Activated CD4-positive, alpha-beta T cell treated with anti-CD3 and anti-CD28 coated beads for 36 hours (primary cell): ENCODE measurements at regions of chr10 and their contacts with region 1.

Region 1: DNA sequence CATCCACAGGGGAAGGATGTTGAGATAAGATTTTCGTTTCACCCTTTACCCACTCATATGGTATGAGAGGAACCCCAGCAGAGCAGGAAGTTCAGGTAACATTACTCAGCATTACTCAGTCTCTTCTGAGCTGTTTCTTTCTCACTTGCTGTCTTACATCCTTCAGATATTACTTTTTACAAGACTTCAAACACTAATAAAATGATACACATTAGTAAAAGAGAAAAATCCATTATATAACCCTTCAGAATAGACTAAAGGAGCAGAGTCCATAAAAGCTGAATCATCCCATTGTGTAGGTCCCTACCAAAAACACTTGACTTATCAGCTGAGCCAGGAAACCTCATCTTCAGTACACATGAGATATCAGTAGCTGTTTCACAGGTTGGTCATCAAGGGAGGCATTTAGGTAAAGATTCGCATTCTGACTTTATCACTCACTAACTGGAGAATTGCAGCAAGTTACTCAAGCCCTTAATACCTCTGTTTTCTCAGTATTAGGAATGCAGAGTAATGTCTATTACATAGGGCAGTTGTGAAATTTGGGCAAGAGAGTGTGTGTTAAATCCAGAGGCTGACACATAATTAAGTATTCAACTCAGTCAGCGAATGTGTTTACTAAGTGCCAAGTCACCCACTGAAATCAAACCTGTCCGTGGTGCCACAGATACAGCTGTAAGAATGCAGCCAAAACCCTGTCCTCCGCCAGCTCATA is 44.7 kb downstream of the KLF6 start:
- DNase-seq: peak; percentile 38
- ATAC-seq: peak; percentile 85
- H3K4me3 Mint-ChIP-seq: no peak overlapping the region
- H3K27ac Mint-ChIP-seq: peak overlapping the region; percentile 60
- H3K4me1 Mint-ChIP-seq: peaks cover 33% of the 10 kb centered on the region
- H3K27me3 Mint-ChIP-seq: no peaks in the 10 kb centered on the region

Region 2: DNA sequence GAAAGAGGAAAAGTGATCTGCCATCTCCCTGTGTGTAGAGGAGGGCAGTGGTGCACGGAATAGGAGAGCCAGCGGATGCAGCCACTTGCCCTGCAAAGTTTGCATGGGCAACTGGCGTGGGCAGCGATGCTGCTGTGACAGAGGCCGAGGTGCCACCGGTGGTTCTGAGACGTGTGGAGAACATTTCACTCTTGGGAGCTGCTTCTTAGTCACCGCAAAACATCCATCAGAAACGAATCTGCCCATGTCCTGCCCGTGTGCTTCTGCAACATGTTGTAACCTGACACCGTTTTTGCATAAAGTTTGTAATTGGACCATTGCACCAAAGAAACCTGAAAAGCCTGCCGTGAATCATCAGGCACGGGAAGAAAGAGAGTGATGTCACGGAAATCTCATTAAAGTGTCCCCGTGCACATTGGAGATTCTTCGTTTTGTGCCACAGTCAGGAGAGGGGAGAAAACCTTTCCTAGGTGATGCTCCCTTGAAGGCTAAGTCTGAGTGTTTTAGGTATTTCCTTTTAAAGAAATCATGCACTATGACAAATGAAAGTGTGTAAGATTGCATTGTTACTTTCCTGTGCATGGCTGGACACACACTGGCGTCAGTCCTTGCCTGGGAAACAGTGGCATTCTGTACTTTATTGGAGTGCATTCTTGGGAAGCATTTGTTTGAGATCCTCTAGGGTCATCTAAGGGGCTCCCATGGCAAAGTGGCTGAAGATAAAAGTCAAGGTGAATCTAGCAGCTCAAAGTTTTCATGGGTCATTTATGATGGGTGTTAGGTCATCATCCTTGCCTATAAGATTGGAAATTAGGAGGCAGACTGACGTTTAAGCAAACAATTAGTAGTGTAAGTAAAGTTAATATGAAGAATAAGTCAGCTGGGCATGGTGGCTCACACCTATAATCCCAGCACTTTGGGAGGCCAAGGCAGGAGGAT is 257.8 kb before region 1 on chr10:
- CTCF ChIA-PET with region 1: no interaction called
- POLR2A ChIA-PET with region 1: no interaction called
- intact Hi-C with region 1: no loop called
- DNase-seq: peak; percentile 18
- ATAC-seq: peak; percentile 28
- H3K4me3 Mint-ChIP-seq: no peak overlapping the region
- H3K27ac Mint-ChIP-seq: no peak overlapping the region
- H3K4me1 Mint-ChIP-seq: peaks cover 42% of the 10 kb centered on the region
- H3K27me3 Mint-ChIP-seq: no peaks in the 10 kb centered on the region

Region 3: GRCh38 chr10:3623746-3624145 is 116.6 kb before region 1 on chr10:
- CTCF ChIA-PET with region 1: interaction called, 3 read pairs
- POLR2A ChIA-PET with region 1: interaction called, 3 read pairs
- intact Hi-C with region 1: loop called (anchors 1 to 2 kb)
- DNase-seq: no peak
- ATAC-seq: no peak
- H3K4me3 Mint-ChIP-seq: no peak overlapping the region
- H3K27ac Mint-ChIP-seq: peak overlapping the region; percentile 14
- H3K4me1 Mint-ChIP-seq: peaks cover 30% of the 10 kb centered on the region
- H3K27me3 Mint-ChIP-seq: no peaks in the 10 kb centered on the region

Region 4: DNA sequence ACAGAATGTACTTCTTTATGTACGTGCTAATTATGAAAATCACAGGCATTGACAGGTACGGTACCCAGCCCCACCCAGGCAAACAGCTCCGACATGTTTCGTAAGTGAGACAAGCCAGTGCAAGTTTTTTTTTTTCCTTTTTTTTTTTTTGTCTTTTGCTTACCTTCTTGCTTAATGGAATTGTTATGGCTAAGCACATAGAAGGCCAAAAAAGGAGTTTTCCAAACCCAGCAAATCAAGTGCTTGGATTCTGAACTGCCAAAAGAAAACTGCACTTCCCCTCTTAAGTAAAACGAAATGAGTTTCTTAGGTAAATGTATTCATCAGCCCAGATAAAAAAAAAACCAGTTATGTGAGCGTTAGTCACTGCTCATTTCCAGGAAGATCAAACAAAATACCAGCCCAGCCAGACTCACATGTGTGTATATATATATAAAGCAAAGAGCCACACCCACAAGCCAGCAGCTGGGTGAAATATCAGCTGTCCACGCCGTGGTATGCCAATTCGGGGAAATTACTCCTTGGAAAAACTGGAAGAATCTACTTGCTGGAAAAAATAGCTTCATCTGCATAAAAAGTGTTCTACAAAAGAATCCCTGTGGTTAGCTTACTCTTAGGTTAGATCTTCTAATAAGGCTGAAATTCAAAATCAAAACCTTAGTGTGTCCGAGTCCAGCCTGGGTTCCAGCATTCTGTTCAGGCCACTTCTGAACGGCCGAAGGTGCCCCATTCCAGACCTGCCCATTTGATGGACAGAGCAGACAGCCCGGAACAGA is 36.7 kb after region 1 on chr10:
- CTCF ChIA-PET with region 1: no interaction called
- POLR2A ChIA-PET with region 1: interaction called, 10 read pairs
- intact Hi-C with region 1: loop called (anchors 1 kb)
- DNase-seq: peak; percentile 71
- ATAC-seq: peak; percentile 68
- H3K4me3 Mint-ChIP-seq: peak overlapping the region; percentile 62
- H3K27ac Mint-ChIP-seq: peak overlapping the region; percentile 90
- H3K4me1 Mint-ChIP-seq: peaks cover 67% of the 10 kb centered on the region
- H3K27me3 Mint-ChIP-seq: no peaks in the 10 kb centered on the region

Region 5: DNA sequence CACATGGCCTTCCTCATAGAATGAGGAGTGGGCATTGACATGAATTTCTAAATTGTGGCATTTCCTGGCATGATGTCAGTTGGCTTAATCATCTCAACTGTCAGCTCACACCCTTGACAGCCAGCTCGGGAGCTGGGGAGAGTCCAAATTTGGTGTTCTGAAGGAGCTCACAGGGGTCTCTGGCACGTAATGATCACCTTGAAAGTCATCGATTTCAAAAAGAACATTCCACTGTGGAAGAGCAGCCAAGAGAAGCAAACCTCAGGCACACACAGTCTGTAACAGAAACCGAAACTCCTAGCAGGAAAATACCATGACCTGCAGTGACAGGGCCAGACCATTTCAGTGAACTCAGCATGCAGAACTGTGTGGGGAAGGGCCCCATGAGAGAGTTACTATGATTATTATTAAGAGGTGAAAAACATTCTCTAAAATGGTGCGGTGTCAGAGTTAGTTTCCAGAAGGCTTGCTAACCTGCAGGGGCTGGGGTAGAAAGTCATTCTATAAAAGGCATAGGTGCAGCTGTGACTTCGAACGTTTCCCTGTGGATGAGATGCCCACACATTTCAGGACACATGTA is 71.1 kb after region 1 on chr10:
- CTCF ChIA-PET with region 1: interaction called, 3 read pairs
- POLR2A ChIA-PET with region 1: interaction called, 10 read pairs
- intact Hi-C with region 1: loop called (anchors 1 to 2 kb)
- DNase-seq: peak; percentile 78
- ATAC-seq: peak; percentile 62
- H3K4me3 Mint-ChIP-seq: peak overlapping the region; percentile 42
- H3K27ac Mint-ChIP-seq: no peak overlapping the region
- H3K4me1 Mint-ChIP-seq: peaks cover 80% of the 10 kb centered on the region
- H3K27me3 Mint-ChIP-seq: no peaks in the 10 kb centered on the region

Region 6: DNA sequence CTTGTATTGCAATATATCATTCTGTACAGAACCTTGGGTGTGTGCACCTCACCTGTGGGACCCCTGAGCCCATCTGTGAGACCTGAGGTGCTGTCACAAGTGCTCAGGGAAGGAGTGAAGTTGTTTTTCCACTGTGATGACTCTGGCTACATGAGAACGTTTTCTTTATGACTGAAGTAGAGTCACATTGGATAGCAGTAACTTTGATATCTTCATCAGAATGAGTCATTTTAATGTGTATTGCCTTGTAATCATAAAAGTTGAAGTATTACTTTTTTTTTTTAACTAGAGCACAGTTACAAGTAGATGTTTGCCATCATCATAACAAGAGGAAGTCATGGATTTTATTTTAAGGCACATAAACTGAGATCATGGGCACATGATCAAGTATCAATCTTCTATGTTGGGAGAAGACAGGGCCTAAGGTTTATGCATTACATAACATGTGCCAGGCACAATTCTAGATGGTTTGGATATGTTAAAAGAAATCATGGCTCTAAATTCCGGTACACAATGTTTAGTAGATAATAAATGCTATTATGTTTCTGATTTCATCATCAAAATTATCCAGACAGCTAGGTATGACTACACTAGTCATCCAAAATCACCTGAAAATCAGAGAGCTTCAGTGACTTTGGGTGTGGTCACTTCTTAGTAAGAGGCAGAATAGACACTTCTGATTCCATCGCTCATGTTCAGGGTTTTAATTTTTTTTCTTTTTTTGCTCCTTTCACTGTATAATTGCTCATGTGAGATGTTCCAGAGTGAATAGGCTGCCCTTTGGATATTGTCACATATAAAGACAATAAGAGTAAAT is 127.3 kb after region 1 on chr10:
- CTCF ChIA-PET with region 1: no interaction called
- POLR2A ChIA-PET with region 1: no interaction called
- intact Hi-C with region 1: loop called in 1 of 2 experiments (anchors 2 kb)
- DNase-seq: peak; percentile 60
- ATAC-seq: peak; percentile 76
- H3K4me3 Mint-ChIP-seq: peak overlapping the region; percentile 10
- H3K27ac Mint-ChIP-seq: peak overlapping the region; percentile 81
- H3K4me1 Mint-ChIP-seq: peaks cover 69% of the 10 kb centered on the region
- H3K27me3 Mint-ChIP-seq: no peaks in the 10 kb centered on the region